ENCODE measurements at regions of chr4 and their contacts with region 1.

Region 1: DNA sequence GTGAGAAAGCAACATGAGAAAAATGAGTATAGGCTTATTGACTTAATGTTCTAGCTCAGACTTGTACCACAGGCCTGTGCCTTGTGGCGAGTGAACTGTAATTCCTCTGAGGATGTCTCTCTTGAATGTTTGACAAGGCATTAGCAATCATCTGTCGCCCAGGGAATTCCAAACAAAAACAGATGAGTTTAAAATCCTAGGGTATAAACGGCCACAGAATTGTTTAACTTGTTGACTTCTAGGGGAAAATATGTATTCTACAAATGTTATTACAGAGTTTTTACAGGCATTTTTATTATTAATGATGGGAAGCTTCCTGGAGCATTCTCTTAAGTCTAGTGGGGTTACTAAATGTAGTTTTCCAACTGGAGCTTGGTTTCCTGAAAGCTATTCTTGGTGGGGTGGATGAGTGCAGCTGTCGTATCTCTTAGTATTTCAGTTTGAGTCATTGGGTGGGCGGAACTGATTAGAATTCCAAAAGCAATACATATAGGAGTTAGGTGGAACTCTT is 40.6 kb downstream of the ARHGAP10 start:
- DNase-seq: no peak
- ATAC-seq: peak; percentile 27 to 70 (median 50)
- H3K4me3 ChIP-seq: peak overlapping the region in 1 of 12 donors; percentile 7
- H3K27ac ChIP-seq: peak overlapping the region; percentile 9 to 85 (median 72)
- H3K4me1 ChIP-seq: peaks cover 12 to 87% (median 58%) of the 10 kb centered on the region in 12 donors
- H3K27me3 ChIP-seq: no peaks in the 10 kb centered on the region
- CTCF ChIP-seq: no peak
- POLR2A ChIP-seq: no peak

Region 2: DNA sequence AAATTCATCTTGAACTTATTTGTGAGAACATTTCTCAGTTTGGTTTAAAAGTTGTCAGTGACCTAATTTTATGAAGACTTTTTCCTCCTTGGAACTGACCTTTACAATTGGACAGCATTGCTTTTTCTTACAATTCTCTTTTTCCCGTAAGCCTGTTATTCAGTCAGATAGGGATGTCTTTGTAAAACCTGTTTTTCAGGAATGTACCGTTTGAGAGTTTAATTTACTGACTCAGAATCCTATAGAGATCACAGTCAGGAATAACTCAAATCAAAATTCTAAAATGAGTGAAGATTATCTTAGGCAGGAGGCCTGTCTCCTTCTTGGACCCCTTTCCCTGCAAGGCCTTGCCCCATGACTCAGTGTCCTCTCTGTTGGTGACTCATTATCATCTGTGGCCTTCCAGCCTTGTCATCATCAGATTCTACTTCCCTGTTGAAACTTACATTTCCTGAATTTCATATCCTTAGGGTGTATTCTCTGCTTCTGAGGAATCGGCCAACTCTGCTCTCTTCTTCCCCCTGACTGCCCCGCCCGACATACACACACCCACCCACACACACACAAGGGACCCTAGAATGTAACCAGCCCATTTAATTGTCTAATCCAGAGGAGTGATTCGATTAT is 59.1 kb after region 1 on chr4:
- intact Hi-C with region 1: loop called in 1 of 10 experiments (anchors 10 kb)
- DNase-seq: peak in 3 of 5 donors; percentile 39 to 54 (median 43)
- ATAC-seq: peak; percentile 31 to 77 (median 64)
- H3K4me3 ChIP-seq: no peak overlapping the region
- H3K27ac ChIP-seq: peak overlapping the region; percentile 75 to 97 (median 88)
- H3K4me1 ChIP-seq: peaks cover 0 to 76% (median 51%) of the 10 kb centered on the region in 12 donors
- H3K27me3 ChIP-seq: no peaks in the 10 kb centered on the region
- CTCF ChIP-seq: no peak
- POLR2A ChIP-seq: no peak